CD8-positive, alpha-beta T cell (primary cell): ENCODE measurements at regions of chr18 and their contacts with region 1.

Region 1: DNA sequence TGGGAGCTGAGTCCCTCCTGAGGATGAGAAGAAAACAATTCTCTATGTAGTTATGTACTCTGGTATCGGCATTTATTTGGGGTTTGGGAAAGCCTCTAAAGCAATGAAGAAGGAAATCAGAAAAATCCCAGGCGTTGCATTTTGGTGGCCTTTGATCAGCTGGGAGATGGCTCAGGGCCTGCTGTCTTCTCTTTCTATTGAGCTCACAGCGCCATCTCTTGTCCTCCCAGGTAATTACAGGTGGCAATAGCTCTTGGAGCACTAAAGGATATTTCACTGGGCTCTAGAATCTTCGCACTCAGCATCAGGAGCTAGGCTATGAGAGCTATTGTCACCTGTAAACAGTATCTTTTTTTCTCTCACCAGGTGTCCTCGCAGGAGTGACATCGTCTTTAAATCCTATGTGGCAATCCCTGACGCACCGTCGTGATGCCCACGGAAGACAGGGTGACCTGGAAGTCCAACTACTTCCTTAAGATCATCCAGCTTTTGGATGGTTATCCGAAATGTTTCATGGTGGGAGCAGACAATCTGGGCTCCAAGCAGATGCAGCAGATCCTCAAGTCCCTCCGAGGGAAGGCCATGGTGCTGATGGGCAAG is 76.1 kb upstream of the PMAIP1 start:
- DNase-seq: peak in 4 of 9 experiments; percentile 16 to 45 (median 30)
- ATAC-seq: no peak
- H3K4me3 ChIP-seq: no peak overlapping the region
- H3K4me3 Mint-ChIP-seq: no peak overlapping the region
- H3K27ac ChIP-seq: no peak overlapping the region
- H3K27ac Mint-ChIP-seq: no peak overlapping the region
- H3K4me1 ChIP-seq: no peaks in the 10 kb centered on the region
- H3K4me1 Mint-ChIP-seq: peaks cover 3% of the 10 kb centered on the region
- H3K27me3 ChIP-seq: no peaks in the 10 kb centered on the region
- H3K27me3 Mint-ChIP-seq: peaks cover 7% of the 10 kb centered on the region
- CTCF ChIP-seq: peak; percentile 28

Region 2: DNA sequence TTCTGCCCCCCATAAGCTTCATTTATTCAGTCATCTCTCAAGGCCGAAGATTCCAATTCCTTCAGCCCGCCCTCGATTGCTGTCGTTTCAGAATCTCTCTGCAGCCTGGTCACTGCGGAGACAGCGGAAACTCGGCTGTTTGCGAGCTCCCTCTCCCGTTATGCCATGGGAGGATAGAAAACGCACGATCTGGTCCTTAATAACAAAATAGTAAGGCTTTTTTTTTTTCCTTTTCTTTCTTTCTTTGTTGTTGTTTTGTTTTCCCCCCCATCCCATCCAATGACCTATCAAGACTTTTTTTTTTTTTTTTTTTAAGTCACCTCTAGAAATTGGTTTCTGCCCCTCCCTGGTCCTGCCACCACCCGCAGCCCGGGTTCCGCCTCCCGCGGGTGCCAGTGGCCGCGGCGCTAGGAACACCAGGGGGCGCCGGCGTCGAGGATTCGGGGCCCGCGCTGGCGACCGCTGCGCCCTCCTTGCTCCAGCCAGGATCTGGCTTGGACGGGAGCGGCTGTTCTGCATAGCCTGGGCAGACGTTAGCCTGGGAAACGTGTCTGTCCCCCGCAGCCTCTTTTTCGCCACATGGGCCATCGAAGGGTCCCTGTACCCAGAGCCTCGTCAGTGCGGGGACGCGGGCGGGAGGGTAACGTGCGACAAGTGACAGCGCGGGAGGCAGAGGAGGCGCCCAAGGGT is 515.3 kb before region 1 on chr18:
- CTCF ChIA-PET with region 1: interaction called, 6 read pairs
- POLR2A ChIA-PET with region 1: no interaction called
- intact Hi-C with region 1: loop called in 1 of 2 experiments (anchors 5 kb)
- DNase-seq: peak; percentile 30 to 76 (median 61)
- ATAC-seq: peak; percentile 84
- H3K4me3 ChIP-seq: peak overlapping the region in 1 of 2 experiments; percentile 29
- H3K4me3 Mint-ChIP-seq: peak overlapping the region; percentile 67
- H3K27ac ChIP-seq: no peak overlapping the region
- H3K27ac Mint-ChIP-seq: no peak overlapping the region
- H3K4me1 ChIP-seq: peaks cover 5% of the 10 kb centered on the region
- H3K4me1 Mint-ChIP-seq: no peaks in the 10 kb centered on the region
- H3K27me3 ChIP-seq: peaks cover 0 to 5% of the 10 kb centered on the region in 2 experiments
- H3K27me3 Mint-ChIP-seq: peaks cover 45% of the 10 kb centered on the region
- CTCF ChIP-seq: peak; percentile 76

Region 3: DNA sequence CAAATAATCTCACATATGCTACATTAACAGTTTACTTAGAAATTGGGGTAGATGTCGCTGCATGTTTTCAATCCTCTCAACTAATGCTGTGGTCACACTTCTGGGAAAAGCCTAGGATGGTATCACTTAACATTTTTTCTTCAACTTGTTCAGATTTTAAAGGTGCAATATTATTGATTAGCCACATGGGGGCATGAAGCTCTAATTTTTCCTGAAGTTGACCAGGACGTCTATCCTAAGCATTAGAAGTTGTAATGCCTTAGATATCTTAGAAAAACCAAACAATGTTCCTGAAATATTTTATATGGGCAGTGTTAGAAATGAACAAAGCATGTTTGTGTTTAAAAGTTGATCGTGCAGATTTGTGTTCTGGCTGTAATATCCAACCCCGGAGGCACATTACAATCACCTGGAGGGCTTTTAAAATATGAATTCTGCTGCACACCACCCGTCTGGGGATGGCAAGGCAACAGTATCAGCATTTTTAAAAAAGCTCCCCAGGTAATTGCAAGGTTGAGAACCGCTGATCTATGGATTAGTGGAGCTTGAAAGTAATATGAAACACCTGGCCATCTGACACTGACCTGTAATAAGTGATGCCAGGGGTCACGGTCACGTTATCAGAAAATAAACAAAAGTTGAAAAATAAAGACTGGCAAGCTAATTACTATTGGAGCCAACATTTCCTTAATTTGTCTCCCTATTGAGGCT is 364.2 kb before region 1 on chr18:
- CTCF ChIA-PET with region 1: interaction called, 4 read pairs
- POLR2A ChIA-PET with region 1: no interaction called
- intact Hi-C with region 1: loop called in 1 of 2 experiments (anchors 5 kb)
- DNase-seq: peak in 1 of 9 experiments; percentile 5
- ATAC-seq: no peak
- H3K4me3 ChIP-seq: no peak overlapping the region
- H3K4me3 Mint-ChIP-seq: no peak overlapping the region
- H3K27ac ChIP-seq: no peak overlapping the region
- H3K27ac Mint-ChIP-seq: no peak overlapping the region
- H3K4me1 ChIP-seq: no peaks in the 10 kb centered on the region
- H3K4me1 Mint-ChIP-seq: no peaks in the 10 kb centered on the region
- H3K27me3 ChIP-seq: no peaks in the 10 kb centered on the region
- H3K27me3 Mint-ChIP-seq: peaks cover 18% of the 10 kb centered on the region
- CTCF ChIP-seq: peak; percentile 54

Region 4: GRCh38 chr18:59697236-59697932 is 126.3 kb before region 1 on chr18 and contains the start of gene CCBE1:
- CTCF ChIA-PET with region 1: no interaction called
- POLR2A ChIA-PET with region 1: no interaction called
- intact Hi-C with region 1: loop called in 1 of 2 experiments (anchors 5 kb)
- DNase-seq: peak in 1 of 9 experiments; percentile 2
- ATAC-seq: no peak
- H3K4me3 ChIP-seq: no peak within 1 kb of the TSS
- H3K4me3 Mint-ChIP-seq: peak within 1 kb of the TSS; percentile 11
- H3K27ac ChIP-seq: no peak within 1 kb of the TSS
- H3K27ac Mint-ChIP-seq: no peak within 1 kb of the TSS
- H3K4me1 ChIP-seq: no peaks in the 10 kb centered on the region
- H3K4me1 Mint-ChIP-seq: peaks cover 9% of the 10 kb centered on the region
- H3K27me3 ChIP-seq: peaks cover 0 to 10% of the 10 kb centered on the region in 2 experiments
- H3K27me3 Mint-ChIP-seq: peaks cover 45% of the 10 kb centered on the region
- CTCF ChIP-seq: peak; percentile 21
- total RNA-seq, gene CCBE1: not detected

Region 5: DNA sequence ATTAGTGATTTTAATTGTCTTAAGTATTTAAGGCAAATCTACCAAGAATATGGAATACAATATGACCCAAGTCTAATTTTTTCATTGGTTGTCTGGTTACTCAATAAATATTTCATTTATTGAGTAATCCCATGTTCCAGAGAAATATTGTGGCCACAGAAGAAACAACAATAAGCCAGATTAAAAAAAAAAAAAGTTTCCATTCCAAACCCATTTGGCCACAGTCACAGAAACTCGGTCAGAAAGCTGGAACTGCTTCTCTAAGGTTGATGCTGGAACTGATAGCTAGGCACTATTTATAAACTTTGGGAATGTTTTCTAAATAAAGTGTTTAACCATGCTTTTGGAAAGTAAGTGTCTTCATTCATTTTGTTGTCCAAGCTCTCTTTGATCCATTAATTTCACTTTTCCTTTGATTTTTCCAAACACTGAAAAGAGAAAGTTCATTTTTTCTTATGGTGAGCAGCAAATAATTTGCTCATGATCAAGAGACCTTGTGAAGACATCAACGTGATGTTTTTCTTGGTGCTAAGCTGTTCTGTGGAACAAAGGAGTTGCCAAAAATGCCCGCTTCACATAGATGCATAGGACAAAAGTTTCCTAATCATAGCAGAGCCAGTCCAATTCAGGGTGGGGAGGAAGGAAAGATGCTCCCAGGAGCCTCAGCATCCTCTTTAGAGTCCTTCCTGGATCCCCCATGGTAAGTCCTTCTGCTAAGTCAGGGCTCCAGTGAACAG is 54.4 kb before region 1 on chr18:
- CTCF ChIA-PET with region 1: no interaction called
- POLR2A ChIA-PET with region 1: no interaction called
- intact Hi-C with region 1: no loop called
- DNase-seq: no peak
- ATAC-seq: no peak
- H3K4me3 ChIP-seq: no peak overlapping the region
- H3K4me3 Mint-ChIP-seq: no peak overlapping the region
- H3K27ac ChIP-seq: no peak overlapping the region
- H3K27ac Mint-ChIP-seq: no peak overlapping the region
- H3K4me1 ChIP-seq: no peaks in the 10 kb centered on the region
- H3K4me1 Mint-ChIP-seq: no peaks in the 10 kb centered on the region
- H3K27me3 ChIP-seq: no peaks in the 10 kb centered on the region
- H3K27me3 Mint-ChIP-seq: peaks cover 20% of the 10 kb centered on the region
- CTCF ChIP-seq: no peak